Prostate gland (tissue), 2 donors: ENCODE measurements at regions of chr5 and their contacts with region 1.

Region 1: DNA sequence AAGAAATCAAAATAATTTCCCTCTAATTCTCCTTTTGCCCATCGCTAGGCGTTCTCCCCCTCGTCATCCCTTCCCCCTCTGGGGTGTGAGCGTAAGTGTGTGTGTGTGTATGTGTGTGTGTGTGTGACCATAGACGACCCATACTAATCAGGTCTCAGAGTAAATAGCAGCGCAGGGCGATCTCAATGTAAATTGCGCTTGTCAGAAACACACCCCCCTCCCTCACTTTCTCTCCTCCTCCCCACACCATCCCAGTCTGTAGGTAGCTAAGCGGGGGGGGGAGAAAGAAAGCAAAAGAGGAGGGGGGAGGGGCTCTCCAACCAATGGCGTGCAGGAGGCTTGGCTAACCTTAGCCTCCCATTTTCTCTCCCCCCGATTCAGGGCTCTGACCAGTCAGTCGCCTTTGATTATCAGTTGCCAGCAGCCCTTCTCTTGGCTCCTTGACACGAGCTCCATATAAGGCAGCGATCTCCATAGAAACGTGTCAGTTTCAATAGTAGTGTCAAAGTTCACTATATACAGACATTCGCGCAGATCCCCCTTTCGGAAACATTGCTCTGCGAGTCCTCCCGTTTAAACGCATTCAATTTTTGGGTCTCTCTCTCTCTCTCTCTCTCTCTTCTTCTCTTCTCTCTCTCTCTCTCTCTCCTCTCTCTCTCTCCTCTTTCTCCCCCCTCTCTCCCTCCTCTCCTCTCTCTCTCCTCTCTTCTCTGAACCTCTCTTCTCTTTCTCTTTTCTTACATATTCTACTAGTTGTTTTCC is at the start of gene NR2F1:
- DNase-seq: no peak
- H3K4me3 ChIP-seq: peak within 1 kb of the TSS; percentile 56
- H3K27ac ChIP-seq: peak within 1 kb of the TSS; percentile 68 to 79
- H3K4me1 ChIP-seq: no peaks in the 10 kb centered on the region
- H3K27me3 ChIP-seq: no peaks in the 10 kb centered on the region
- CTCF ChIP-seq: peak in 2 of 4 experiments; percentile 90 to 94
- POLR2A ChIP-seq: no peak
- total RNA-seq, gene NR2F1: 14.9 to 49.3 TPM

Region 2: DNA sequence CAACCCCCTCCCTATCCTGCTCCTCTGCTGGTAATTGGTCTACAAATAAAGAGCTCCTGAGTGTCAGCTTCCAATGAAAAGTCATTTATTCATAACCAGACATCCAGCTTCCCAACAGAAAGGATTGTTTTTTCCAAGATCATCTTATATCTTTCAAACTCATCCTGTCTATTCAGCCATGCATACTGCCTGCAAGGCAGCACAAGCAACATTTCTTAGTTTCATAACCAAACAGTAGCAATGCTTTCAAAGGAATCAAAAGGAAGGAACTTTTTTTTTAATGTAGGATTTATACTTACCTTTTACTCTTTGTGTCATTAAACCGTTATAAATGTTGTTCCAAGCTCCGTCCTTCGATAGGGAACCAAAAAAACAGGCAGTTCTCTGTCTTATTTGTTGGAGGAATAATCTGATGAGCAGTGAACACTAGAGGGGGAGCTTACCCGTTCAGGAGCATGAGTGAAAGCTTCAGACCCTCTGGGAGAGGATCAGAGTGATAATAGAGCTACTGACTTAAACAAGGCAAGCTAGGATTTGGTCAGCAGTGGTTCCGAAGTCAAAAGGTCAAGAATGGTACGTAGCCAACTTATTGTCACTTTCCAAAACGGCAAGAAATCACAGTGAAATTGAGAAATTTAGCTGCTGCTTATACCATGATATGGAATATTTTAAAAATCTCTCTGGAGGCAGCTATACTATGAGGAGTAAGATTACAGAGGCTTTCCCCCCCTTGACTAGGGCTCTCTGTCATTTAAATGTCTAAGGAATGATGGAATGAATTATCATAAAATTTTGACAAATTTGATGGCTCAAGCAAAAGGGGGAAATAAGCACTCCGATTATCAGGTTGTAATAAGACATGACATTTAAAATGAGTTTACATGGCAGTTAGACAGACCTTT is 894.8 kb before region 1 on chr5:
- intact Hi-C with region 1: loop called (anchors 5 kb)
- DNase-seq: no peak
- H3K4me3 ChIP-seq: no peak overlapping the region
- H3K27ac ChIP-seq: no peak overlapping the region
- H3K4me1 ChIP-seq: no peaks in the 10 kb centered on the region
- H3K27me3 ChIP-seq: no peaks in the 10 kb centered on the region
- CTCF ChIP-seq: peak in 2 of 4 experiments; percentile 11 to 12
- POLR2A ChIP-seq: no peak

Region 3: GRCh38 chr5:93100428-93100827 is 482.4 kb before region 1 on chr5:
- intact Hi-C with region 1: loop called (anchors 5 kb)
- DNase-seq: no peak
- H3K4me3 ChIP-seq: no peak overlapping the region
- H3K27ac ChIP-seq: no peak overlapping the region
- H3K4me1 ChIP-seq: no peaks in the 10 kb centered on the region
- H3K27me3 ChIP-seq: no peaks in the 10 kb centered on the region
- CTCF ChIP-seq: no peak
- POLR2A ChIP-seq: no peak

Region 4: DNA sequence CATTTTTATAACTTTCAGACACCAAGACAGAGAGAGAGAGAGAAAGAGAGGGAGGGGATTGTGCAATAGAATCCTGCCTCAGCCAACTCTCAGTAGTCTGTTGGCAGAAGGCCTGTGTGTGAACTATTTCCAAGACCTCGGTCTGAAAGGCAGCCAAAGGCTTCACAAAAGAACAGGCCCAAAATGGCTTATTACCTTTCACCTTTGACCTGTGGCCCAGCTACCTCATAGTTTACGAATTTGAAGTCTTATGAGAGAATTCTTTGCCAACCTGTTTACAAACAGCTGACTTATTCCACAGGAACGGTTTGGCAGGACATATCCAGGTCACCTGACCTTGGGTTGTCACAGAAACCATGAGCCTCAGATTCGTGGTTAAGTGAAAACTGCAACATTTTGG is 50.5 kb before region 1 on chr5:
- intact Hi-C with region 1: loop called (anchors 5 kb)
- DNase-seq: peak; percentile 26
- H3K4me3 ChIP-seq: no peak overlapping the region
- H3K27ac ChIP-seq: no peak overlapping the region
- H3K4me1 ChIP-seq: no peaks in the 10 kb centered on the region
- H3K27me3 ChIP-seq: no peaks in the 10 kb centered on the region
- CTCF ChIP-seq: no peak
- POLR2A ChIP-seq: no peak

Region 5: GRCh38 chr5:94693043-94693822 is 1110.4 kb after region 1 on chr5:
- intact Hi-C with region 1: loop called (anchors 10 kb)
- DNase-seq: no peak
- H3K4me3 ChIP-seq: no peak overlapping the region
- H3K27ac ChIP-seq: no peak overlapping the region
- H3K4me1 ChIP-seq: no peaks in the 10 kb centered on the region
- H3K27me3 ChIP-seq: no peaks in the 10 kb centered on the region
- CTCF ChIP-seq: peak in 3 of 4 experiments; percentile 26 to 48 (median 42)
- POLR2A ChIP-seq: no peak